Cardiac septum (tissue), 1 donor: ENCODE measurements at regions of chr3 and their contacts with region 1.

Region 1: GRCh38 chr3:101381809-101382208 is 61.4 kb upstream of the IMPG2 start:
- DNase-seq: no peak

Region 2: DNA sequence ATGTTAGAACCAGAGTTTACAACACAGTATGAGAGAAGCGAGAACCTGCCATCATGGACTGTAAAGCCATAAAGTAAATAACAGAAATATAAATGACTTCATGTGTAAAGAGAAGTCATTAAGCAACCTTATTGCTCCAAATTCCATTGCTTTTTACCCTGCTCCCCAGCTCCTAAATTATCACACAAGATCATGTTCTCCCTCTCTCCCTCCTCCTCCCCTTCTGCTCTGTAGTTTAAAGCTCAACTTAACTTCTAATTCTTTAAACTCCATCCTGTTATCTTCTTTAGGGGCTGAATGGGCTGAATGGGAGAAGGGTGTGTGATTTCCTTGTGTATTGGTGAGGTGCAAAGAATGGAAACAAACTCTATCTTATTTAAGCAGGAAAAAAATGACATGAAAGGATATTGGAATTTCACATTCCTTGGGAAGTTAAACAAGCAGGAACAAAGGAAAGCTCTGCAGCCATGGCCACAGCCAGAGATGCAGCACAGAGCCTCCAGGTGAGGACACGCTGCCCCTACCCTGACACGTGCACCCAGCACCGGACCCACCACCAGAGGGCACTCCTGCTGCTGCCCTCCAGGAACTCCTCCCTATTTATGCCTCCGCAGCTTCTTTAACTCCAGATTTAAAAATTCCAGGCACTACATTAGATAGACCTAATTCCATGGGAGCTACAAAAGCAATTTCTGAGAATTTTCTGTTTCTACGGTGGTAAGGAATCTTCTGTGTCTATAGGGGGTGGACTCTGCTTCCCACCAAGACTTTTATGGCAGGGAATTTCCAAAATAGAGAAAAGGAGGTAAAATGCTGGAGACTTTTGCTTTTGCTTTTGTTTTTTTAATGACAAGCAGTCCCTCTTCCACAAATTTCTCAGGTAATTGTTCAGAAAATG is 311.7 kb before region 1 on chr3:
- intact Hi-C with region 1: loop called (anchors 10 kb)
- DNase-seq: no peak

Region 3: GRCh38 chr3:101229681-101230080 is 152.1 kb before region 1 on chr3:
- intact Hi-C with region 1: loop called (anchors 5 kb)
- DNase-seq: no peak